ENCODE measurements at regions of chr9 and their contacts with region 1.

Region 1: DNA sequence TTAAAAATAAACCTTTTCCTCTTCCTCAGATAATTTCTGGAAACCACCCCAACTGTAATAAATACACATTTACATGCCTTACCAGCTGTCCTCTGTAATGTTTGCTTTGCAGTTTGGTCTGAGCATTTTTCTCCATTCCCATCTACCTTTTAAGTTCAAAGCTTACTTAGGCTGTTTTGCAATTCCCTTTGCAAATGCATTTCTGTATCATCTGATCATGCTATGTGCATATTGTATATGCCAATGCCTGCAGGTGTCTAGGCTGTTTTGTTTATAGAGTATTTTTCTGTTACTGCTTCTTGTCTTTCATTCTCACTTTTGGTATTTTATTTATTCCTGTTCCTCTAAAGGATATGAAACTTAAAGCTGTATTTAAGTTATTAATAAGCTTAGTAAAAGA is 86.3 kb downstream of the SLC44A1 start:
- DNase-seq: peak; percentile 32
- H3K4me3 ChIP-seq: peak overlapping the region; percentile 9
- H3K27ac ChIP-seq: peak overlapping the region; percentile 43
- H3K4me1 ChIP-seq: peaks cover 38% of the 10 kb centered on the region
- CTCF ChIP-seq: no peak

Region 2: DNA sequence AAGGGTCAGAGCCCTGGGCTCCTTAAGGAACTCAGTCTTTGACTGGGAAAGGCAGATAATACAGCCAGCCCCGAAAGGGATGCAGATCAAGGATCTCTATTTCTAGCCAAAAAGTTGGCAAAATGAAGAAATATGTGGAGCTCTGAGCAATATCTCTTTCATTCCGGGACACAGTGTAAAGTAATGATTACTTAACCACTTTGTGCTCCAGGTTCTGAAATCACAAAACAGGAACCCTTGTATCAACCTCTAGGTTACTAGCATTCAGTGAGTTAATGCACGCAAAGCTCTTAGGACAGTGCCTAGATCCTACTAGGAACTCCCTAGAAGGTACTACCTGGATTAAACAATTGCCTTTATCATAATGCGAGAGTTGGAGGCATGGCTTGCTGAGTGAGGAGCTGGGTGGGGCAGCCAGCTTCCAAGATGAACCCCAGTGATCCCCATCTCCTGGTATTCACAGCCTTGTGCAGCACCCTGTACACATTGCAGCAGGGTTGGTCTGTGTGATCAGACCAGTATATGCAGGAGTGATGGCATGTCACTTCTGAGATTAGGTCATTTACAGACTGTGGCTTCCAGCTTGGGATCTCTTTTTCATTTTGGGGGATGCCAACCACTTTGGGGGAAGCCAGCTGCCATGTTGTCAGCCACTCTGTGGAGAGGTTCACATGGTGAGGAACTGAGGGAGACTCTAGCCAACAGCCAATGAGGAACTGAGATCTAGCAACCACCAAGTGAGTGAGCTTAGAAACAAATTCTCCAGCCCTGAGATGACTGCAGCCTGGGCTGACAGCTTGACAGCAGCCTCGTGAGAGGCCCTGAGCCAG is 189.4 kb before region 1 on chr9:
- CTCF ChIA-PET with region 1: no interaction called
- POLR2A ChIA-PET with region 1: no interaction called
- intact Hi-C with region 1: no loop called
- DNase-seq: peak; percentile 33
- H3K4me3 ChIP-seq: no peak overlapping the region
- H3K27ac ChIP-seq: no peak overlapping the region
- H3K4me1 ChIP-seq: no peaks in the 10 kb centered on the region
- CTCF ChIP-seq: no peak

Region 3: DNA sequence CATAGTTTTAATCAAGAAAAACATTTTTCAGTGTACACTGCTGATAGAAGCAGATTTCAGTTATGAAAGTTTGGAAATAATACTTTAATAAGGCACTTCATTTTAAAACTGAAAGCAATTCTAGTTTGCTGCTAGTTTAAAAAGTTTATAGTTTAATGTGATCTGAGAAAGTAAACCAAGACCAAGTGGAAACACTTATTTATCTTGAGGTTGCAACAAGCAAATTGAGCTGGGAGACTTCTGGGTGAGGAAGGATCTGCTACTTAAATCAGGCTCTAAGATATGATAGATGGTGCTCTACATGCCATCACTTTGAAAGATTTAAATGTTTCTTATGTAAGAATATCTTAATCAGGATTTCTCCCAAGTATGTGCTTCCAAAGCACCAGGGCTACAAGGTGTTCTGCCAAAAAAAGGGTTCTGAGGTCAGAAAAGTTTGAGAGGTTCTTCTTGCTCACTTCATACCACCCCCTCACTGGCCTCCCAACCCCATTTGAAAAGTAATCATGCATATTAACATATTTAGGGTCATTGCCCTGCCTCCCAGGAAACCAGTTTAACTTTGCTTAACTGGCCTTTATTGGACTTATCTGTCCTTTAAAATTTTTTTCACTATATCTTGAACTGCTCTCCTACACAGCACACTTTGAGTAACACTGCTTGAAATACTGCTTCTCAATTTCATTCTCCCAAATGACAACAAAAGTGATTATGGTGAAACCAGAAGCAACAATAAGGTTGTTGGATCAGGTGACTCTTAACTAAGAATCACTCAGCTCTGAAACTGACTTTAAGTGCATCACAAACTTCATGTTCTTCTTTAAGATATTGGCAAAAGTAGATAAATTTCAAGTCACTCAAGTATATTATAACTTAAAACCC is 70.8 kb before region 1 on chr9:
- CTCF ChIA-PET with region 1: no interaction called
- POLR2A ChIA-PET with region 1: no interaction called
- intact Hi-C with region 1: loop called (anchors 5 kb)
- DNase-seq: peak; percentile 33
- H3K4me3 ChIP-seq: peak overlapping the region; percentile 30
- H3K27ac ChIP-seq: peak overlapping the region; percentile 81
- H3K4me1 ChIP-seq: peaks cover 64% of the 10 kb centered on the region
- CTCF ChIP-seq: no peak

Region 4: DNA sequence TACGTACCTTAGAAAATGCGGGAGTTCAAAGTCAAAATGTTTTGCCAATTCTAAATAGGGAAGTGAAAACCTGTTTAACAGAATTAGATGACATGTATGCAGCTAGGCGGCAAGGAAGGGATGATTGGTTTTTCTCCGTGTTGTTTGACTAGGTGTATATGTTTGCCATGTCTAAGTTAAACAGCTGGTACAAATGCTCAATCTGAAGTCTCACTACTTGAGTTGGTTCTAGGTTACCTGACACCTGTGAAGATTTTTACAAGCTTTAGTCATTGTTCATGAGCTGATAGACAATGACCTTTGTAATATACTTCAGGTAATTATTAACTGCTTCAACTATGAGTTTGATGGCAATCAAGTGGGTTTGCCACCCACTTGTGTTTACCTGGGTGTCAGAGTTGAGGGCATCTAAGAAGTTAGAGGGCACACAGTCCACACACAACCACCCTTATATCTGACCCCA is 12.0 kb before region 1 on chr9:
- CTCF ChIA-PET with region 1: no interaction called
- POLR2A ChIA-PET with region 1: interaction called, 23 read pairs
- intact Hi-C with region 1: no loop called
- DNase-seq: peak; percentile 61
- H3K4me3 ChIP-seq: peak overlapping the region; percentile 13
- H3K27ac ChIP-seq: peak overlapping the region; percentile 40
- H3K4me1 ChIP-seq: peaks cover 33% of the 10 kb centered on the region
- CTCF ChIP-seq: no peak

Region 5: GRCh38 chr9:105346273-105346672 is 15.5 kb after region 1 on chr9:
- CTCF ChIA-PET with region 1: no interaction called
- POLR2A ChIA-PET with region 1: interaction called, 13 read pairs
- intact Hi-C with region 1: no loop called
- DNase-seq: no peak
- H3K4me3 ChIP-seq: no peak overlapping the region
- H3K27ac ChIP-seq: no peak overlapping the region
- H3K4me1 ChIP-seq: no peaks in the 10 kb centered on the region
- CTCF ChIP-seq: no peak

Region 6: DNA sequence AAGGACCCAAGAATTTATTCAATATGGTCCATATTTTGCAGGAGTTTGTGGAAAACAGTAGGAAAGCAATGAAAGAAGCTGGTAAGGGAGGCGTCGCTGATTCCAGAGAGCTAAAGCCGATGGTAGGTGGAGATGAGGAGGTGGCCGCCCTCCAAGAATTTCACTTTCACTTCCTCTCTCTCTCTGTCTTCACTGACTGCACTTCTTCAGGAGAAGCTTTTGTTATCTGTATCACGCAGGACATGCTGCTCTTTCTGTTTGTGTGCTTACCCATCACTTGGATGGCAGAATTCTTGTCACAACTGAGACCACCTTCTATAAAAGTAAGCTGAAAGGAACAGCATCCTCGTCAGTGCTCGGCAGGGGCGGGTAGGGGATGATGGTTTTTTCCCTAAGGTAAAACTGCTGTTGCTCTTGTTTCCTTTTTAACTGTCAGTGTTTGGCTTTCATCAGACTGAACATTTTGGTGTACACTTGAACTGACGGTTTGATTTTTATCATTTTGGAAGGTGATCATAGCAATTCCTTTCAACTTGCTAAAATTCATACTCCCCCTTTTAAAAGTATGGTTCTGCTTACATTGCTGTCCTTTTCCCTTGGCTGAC is 54.7 kb after region 1 on chr9:
- CTCF ChIA-PET with region 1: no interaction called
- POLR2A ChIA-PET with region 1: interaction called, 4 read pairs
- intact Hi-C with region 1: loop called (anchors 5 kb)
- DNase-seq: peak; percentile 59
- H3K4me3 ChIP-seq: peak overlapping the region; percentile 47
- H3K27ac ChIP-seq: peak overlapping the region; percentile 17
- H3K4me1 ChIP-seq: peaks cover 15% of the 10 kb centered on the region
- CTCF ChIP-seq: no peak